GM23248 (cell line): ENCODE measurements at regions of chr10 and their contacts with region 1.

Region 1: GRCh38 chr10:45672181-45673073 is at the start of gene ZFAND4:
- DNase-seq: peak; percentile 99
- H3K4me3 ChIP-seq: peak within 1 kb of the TSS; percentile 86
- H3K27ac ChIP-seq: peak within 1 kb of the TSS; percentile 69
- H3K4me1 ChIP-seq: no peaks in the 10 kb centered on the region
- H3K27me3 ChIP-seq: no peaks in the 10 kb centered on the region
- total RNA-seq, gene ZFAND4: 5.2 and 8.1 TPM in 2 replicates

Region 2: DNA sequence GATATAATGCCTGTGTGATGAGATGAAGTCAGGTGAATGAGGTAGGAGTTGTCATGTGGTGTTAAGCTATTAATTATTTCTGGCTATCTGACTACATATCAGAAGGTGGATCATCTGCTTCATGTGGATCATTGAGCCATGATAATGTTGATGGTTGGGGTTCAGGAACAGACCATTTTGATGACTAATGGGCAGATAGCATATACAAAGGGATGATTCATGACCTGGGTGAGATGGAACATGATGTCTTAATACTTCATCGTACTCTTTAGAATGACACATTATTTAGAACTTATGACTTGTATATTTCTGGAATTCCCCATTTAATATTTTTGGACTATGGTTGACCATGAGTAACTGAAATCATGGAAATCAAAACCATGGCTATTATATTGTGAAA is 512.2 kb before region 1 on chr10:
- in situ Hi-C with region 1: no loop called
- DNase-seq: peak; percentile 13
- H3K4me3 ChIP-seq: no peak overlapping the region
- H3K27ac ChIP-seq: no peak overlapping the region
- H3K4me1 ChIP-seq: no peaks in the 10 kb centered on the region
- H3K27me3 ChIP-seq: no peaks in the 10 kb centered on the region

Region 3: DNA sequence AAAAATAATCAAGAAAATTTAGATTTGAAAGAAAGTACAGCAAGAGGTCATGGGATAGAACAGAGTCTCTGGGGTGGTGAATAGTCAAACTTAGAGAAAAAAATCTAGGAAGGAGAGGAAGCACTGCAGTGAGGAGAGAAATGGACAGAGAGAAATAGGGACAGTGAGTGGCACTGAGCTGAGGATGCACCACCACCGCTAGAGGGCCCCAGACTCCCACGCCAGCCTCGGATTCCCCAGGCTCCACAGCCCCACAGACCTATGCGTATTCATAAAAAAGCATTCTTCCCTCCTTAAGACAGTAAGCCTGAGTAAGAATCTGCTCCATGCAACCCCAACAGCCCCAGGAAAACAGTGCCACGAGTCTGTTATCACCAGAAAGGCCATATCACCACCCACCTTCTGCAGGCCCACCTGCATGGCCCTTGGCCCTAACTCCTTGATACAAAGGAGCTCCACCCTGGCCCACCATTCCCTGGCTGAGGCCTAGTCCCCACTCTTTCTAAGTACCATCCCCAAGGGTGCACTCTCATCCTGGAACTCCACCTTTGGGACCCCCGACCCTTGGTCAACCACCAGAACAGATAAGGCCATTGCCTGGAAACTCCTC is 207.4 kb before region 1 on chr10:
- in situ Hi-C with region 1: loop called (anchors 10 kb)
- DNase-seq: peak; percentile 83
- H3K4me3 ChIP-seq: no peak overlapping the region
- H3K27ac ChIP-seq: no peak overlapping the region
- H3K4me1 ChIP-seq: no peaks in the 10 kb centered on the region
- H3K27me3 ChIP-seq: no peaks in the 10 kb centered on the region